Ovary (tissue), 10 donors: ENCODE measurements at regions of chr1 and their contacts with region 1.

Region 1: DNA sequence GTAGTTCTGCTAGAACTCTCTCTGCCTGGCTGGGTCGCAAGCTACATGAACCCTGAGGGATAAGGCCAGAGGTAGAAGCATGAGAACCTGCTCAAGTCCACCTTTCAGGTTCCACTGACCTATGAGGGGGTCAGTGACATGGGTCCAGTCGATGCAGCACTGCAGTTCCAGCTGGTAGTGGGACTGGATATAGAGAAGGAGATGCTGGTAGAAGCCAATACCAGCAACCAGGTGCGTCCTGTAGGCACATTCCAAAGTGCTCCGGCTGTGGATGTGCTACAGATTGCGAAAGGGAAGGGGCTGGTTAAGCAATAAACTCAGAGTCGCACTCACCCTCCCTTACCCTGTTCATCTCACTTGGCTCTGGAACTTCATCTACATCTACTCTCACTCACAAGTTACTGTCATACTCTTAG is 5.7 kb downstream of the SMG5 start:
- DNase-seq: no peak
- H3K4me3 ChIP-seq: no peak overlapping the region
- H3K27ac ChIP-seq: no peak overlapping the region
- H3K4me1 ChIP-seq: peaks cover 7% of the 10 kb centered on the region
- H3K27me3 ChIP-seq: no peaks in the 10 kb centered on the region
- CTCF ChIP-seq: no peak
- EP300 ChIP-seq: no peak
- POLR2A ChIP-seq: no peak

Region 2: GRCh38 chr1:156114101-156114916 is 162.7 kb before region 1 on chr1 and contains the start of gene LMNA:
- intact Hi-C with region 1: no loop called
- DNase-seq: peak; percentile 91 to 95 (median 93)
- H3K4me3 ChIP-seq: peak within 1 kb of the TSS; percentile 86
- H3K27ac ChIP-seq: peak within 1 kb of the TSS; percentile 90 to 94
- H3K4me1 ChIP-seq: peaks cover 20% of the 10 kb centered on the region
- H3K27me3 ChIP-seq: no peaks in the 10 kb centered on the region
- CTCF ChIP-seq: no peak
- EP300 ChIP-seq: peak; percentile 71
- POLR2A ChIP-seq: peak; percentile 99
- total RNA-seq, gene LMNA: 197 to 609 (median 377) TPM

Region 3: GRCh38 chr1:156160743-156161171 is 116.2 kb before region 1 on chr1:
- intact Hi-C with region 1: no loop called
- DNase-seq: peak; percentile 87 to 90 (median 88)
- H3K4me3 ChIP-seq: peak overlapping the region; percentile 43
- H3K27ac ChIP-seq: peak overlapping the region; percentile 63 to 77
- H3K4me1 ChIP-seq: peaks cover 5% of the 10 kb centered on the region
- H3K27me3 ChIP-seq: no peaks in the 10 kb centered on the region
- CTCF ChIP-seq: no peak
- EP300 ChIP-seq: no peak
- POLR2A ChIP-seq: no peak

Region 4: DNA sequence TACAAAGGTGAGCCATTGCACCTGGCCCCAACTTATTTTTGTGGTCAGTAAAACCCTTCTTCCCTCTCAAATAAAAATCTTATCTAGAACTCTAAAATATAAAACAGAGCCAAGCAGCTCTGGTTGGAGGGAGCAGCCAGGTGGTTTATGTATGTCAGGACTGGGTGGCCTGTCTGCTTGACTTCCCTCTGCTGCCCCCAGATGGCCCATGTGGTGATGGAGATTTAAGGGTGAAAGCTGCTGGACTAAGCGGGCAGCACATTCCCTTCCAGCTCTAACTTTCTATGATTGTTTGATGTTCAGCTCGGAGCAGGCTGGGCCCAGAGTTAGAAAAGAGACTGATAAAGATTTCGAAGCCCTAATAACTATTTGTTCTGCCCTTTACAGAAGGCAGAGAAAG is 17.2 kb before region 1 on chr1:
- intact Hi-C with region 1: loop called in 1 of 4 experiments (anchors 2 kb)
- DNase-seq: no peak
- H3K4me3 ChIP-seq: no peak overlapping the region
- H3K27ac ChIP-seq: no peak overlapping the region
- H3K4me1 ChIP-seq: no peaks in the 10 kb centered on the region
- H3K27me3 ChIP-seq: no peaks in the 10 kb centered on the region
- CTCF ChIP-seq: no peak
- EP300 ChIP-seq: no peak
- POLR2A ChIP-seq: no peak

Region 5: DNA sequence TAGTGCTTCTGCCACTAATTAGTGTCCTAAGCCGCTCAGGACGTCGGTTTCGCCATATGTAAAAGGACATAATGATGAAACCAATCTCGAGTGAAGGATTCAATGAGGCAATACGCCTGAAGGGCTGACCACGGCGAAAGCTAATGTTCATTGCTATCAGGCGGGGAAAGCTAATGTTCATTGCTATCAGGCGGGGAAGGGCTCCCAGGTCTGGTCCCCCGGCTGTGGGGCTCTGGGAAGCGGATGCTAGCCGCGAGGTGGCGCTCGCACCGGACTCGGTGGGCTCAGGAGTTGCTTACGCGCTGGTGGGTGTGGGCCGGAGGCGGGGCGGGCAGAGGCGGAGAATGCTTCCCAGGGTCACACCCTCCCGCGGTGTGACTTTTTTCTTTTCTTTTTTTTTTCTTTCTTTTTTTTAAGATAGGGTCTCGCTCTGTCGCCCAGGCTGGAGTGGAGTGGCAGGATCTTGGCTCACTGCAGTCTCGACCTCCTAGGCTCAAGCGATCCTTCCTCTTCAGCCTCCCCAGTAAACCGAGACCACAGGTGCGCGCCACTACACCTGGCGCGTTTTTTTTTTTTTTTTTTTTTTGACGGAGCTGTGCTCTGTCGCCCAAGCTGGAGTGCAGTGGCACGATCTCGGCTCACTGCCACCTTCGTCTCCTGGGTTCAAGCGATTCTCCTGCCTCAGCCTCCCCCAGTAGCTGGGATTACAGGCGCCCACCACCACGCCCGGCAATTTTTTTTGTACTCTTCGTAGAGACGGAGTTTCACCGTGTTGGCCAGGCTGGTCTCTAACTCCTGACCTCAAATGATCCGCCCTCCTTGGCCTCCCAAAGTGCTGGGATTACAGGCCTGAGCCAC is 615.4 kb after region 1 on chr1:
- intact Hi-C with region 1: no loop called
- DNase-seq: peak; percentile 92 to 97 (median 94)
- H3K4me3 ChIP-seq: peak overlapping the region; percentile 39
- H3K27ac ChIP-seq: peak overlapping the region in 1 of 2 donors; percentile 94
- H3K4me1 ChIP-seq: peaks cover 14% of the 10 kb centered on the region
- H3K27me3 ChIP-seq: no peaks in the 10 kb centered on the region
- CTCF ChIP-seq: peak; percentile 74 to 94 (median 82)
- EP300 ChIP-seq: no peak
- POLR2A ChIP-seq: no peak